Activated CD4-positive, alpha-beta memory T cell treated with anti-CD3 and anti-CD28 coated beads for 36 hours (primary cell): ENCODE measurements at regions of chr2 and their contacts with region 1.

Region 1: GRCh38 chr2:44928483-44929158 is 12.9 kb upstream of the SIX3 start:
- DNase-seq: peak; percentile 11
- H3K4me3 Mint-ChIP-seq: no peak overlapping the region
- H3K27ac Mint-ChIP-seq: no peak overlapping the region
- H3K4me1 Mint-ChIP-seq: peaks cover 17% of the 10 kb centered on the region
- H3K27me3 Mint-ChIP-seq: peaks cover 72% of the 10 kb centered on the region

Region 2: GRCh38 chr2:45009303-45009927 is 80.8 kb after region 1 on chr2 and contains the start of gene SIX2:
- CTCF ChIA-PET with region 1: no interaction called
- POLR2A ChIA-PET with region 1: no interaction called
- intact Hi-C with region 1: loop called (anchors 2 kb)
- DNase-seq: no peak
- H3K4me3 Mint-ChIP-seq: peak within 1 kb of the TSS; percentile 43
- H3K27ac Mint-ChIP-seq: no peak within 1 kb of the TSS
- H3K4me1 Mint-ChIP-seq: peaks cover 29% of the 10 kb centered on the region
- H3K27me3 Mint-ChIP-seq: peaks cover 74% of the 10 kb centered on the region
- total RNA-seq, gene SIX2: not detected

Region 3: GRCh38 chr2:45153121-45153520 is 224.5 kb after region 1 on chr2:
- CTCF ChIA-PET with region 1: no interaction called
- POLR2A ChIA-PET with region 1: no interaction called
- intact Hi-C with region 1: no loop called
- DNase-seq: no peak
- H3K4me3 Mint-ChIP-seq: no peak overlapping the region
- H3K27ac Mint-ChIP-seq: no peak overlapping the region
- H3K4me1 Mint-ChIP-seq: no peaks in the 10 kb centered on the region
- H3K27me3 Mint-ChIP-seq: peaks cover 11% of the 10 kb centered on the region